OCI-LY7 (cell line): ENCODE measurements at regions of chr18 and their contacts with region 1.

Region 1: DNA sequence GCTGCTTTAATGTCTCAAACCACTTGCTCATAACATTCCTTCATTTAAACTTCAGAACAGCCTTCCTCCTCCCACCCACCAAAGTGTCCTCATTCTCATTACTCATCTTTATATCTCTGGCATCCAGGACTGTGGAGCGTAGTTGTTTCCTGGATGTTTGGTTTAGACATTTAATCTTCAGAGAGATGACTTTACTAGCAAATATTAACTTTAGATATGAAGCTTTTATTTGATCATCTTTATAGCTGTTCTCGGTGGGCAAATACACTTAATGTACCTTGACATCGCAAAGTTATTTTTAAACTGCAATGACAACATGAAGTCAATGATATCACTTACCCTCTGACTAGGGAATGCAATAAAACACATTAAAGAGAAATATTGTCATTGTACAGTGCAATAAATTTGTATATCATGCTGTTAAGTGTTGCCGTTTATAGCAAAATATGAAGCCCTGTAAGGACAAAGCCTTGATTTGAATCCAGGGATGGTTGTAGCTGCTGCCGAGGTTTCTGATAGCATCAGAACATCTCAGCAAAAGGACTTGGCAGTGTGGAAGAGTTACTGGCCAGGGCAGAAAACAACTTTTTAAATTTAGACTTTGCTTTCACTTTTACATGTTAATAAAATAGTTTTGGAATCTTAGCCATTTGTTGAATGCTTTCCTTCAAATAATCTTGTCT is 4.6 kb upstream of the LAMA3 start:
- DNase-seq: no peak
- H3K4me3 ChIP-seq: no peak overlapping the region
- H3K27ac ChIP-seq: no peak overlapping the region
- H3K4me1 ChIP-seq: no peaks in the 10 kb centered on the region
- CTCF ChIP-seq: no peak

Region 2: DNA sequence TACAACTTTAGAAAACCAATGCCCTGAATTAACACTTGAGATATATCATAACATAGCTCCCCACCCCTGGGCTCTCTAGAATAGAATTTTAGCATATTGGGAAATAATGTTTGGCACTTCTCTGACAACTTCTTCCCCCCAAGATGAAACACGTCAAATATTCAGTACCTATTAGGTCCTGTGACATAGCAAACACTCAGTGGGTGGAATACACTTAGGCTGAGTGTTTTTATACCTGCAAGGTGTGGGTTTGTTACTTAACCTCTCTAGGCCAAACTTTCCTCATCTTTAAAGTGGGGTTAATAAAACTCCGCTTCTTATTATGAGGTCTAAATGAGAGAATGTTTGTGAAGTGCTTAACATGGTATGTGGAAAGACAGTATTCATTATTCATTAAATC is 60.7 kb after region 1 on chr18:
- CTCF ChIA-PET with region 1: no interaction called
- POLR2A ChIA-PET with region 1: interaction called, 3 read pairs
- intact Hi-C with region 1: loop called (anchors 5 kb)
- DNase-seq: no peak
- H3K4me3 ChIP-seq: no peak overlapping the region
- H3K27ac ChIP-seq: no peak overlapping the region
- H3K4me1 ChIP-seq: no peaks in the 10 kb centered on the region
- CTCF ChIP-seq: no peak